Gastrocnemius medialis (tissue), 4 donors: ENCODE measurements at regions of chr6 and their contacts with region 1.

Region 1: GRCh38 chr6:45930420-45931040 is 85.1 kb downstream of the CLIC5 start:
- DNase-seq: peak; percentile 53 to 81
- ATAC-seq: peak; percentile 87 to 94
- H3K4me3 ChIP-seq: no peak overlapping the region
- H3K27ac ChIP-seq: peak overlapping the region; percentile 1 to 62 (median 52)
- H3K4me1 ChIP-seq: peaks cover 13 to 20% of the 10 kb centered on the region in 2 donors
- H3K27me3 ChIP-seq: no peaks in the 10 kb centered on the region
- CTCF ChIP-seq: peak; percentile 94 to 98 (median 95)
- POLR2A ChIP-seq: no peak

Region 2: DNA sequence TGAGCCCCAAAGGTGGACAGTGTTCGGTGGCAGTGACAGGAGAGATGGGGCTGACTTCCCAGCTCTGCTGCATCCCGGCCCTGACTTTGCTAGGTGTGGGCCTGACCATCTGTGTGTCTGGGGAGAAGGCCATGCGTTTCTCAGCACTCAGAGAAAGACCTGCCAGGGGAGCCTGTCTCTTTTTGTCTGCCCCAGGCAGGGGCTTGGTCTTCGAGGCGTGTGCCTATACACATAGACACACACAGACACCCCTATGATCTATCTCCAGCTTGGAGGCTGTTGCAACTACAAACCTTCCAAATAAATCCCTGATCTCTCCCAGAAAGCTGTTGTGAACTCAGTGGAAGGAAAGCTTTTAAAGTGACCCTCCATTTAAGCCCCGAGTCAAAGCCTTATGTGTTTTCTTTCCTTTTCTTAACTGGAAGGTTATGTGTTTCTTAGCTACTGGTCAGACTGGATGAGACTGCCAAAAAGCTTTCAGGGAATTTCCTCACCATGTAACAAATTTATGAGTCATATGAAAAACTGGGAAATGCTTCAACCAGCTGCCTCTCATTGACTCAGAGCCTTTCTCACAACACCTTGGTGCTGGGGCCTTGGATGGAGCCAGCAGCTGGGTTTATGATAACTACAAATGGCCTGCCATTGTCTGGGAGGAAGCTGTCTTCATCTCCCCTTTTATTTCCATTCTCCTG is 1440.5 kb before region 1 on chr6:
- in situ Hi-C with region 1: no loop called
- intact Hi-C with region 1: loop called (anchors 5 kb)
- DNase-seq: peak; percentile 36 to 38
- ATAC-seq: peak; percentile 98 to 99
- H3K4me3 ChIP-seq: no peak overlapping the region
- H3K27ac ChIP-seq: peak overlapping the region; percentile 52 to 63 (median 58)
- H3K4me1 ChIP-seq: peaks cover 0 to 5% of the 10 kb centered on the region in 2 donors
- H3K27me3 ChIP-seq: no peaks in the 10 kb centered on the region
- CTCF ChIP-seq: no peak
- POLR2A ChIP-seq: no peak

Region 3: GRCh38 chr6:45741437-45742171 is 188.9 kb before region 1 on chr6:
- in situ Hi-C with region 1: no loop called
- intact Hi-C with region 1: no loop called
- DNase-seq: no peak
- ATAC-seq: peak; percentile 26 to 55
- H3K4me3 ChIP-seq: no peak overlapping the region
- H3K27ac ChIP-seq: peak overlapping the region in 3 of 4 donors; percentile 18 to 41 (median 18)
- H3K4me1 ChIP-seq: peaks cover 5 to 10% of the 10 kb centered on the region in 2 donors
- H3K27me3 ChIP-seq: no peaks in the 10 kb centered on the region
- CTCF ChIP-seq: no peak
- POLR2A ChIP-seq: no peak

Region 4: GRCh38 chr6:45812922-45813321 is 117.6 kb before region 1 on chr6:
- in situ Hi-C with region 1: no loop called
- intact Hi-C with region 1: no loop called
- DNase-seq: no peak
- ATAC-seq: no peak
- H3K4me3 ChIP-seq: no peak overlapping the region
- H3K27ac ChIP-seq: no peak overlapping the region
- H3K4me1 ChIP-seq: peaks cover 3 to 4% of the 10 kb centered on the region in 2 donors
- H3K27me3 ChIP-seq: peaks cover 0 to 2% (median 0%) of the 10 kb centered on the region in 3 donors
- CTCF ChIP-seq: no peak
- POLR2A ChIP-seq: no peak

Region 5: GRCh38 chr6:46015119-46015875 is 84.8 kb after region 1 on chr6 and contains the start of gene CLIC5:
- in situ Hi-C with region 1: no loop called
- intact Hi-C with region 1: loop called (anchors 2 kb)
- DNase-seq: peak; percentile 72 to 83
- ATAC-seq: peak; percentile 68 to 69
- H3K4me3 ChIP-seq: peak within 1 kb of the TSS; percentile 68 to 84 (median 81)
- H3K27ac ChIP-seq: peak within 1 kb of the TSS; percentile 89 to 99 (median 98)
- H3K4me1 ChIP-seq: peaks cover 40 to 43% of the 10 kb centered on the region in 2 donors
- H3K27me3 ChIP-seq: no peaks in the 10 kb centered on the region
- CTCF ChIP-seq: peak in 2 of 5 experiments; percentile 7 to 10
- POLR2A ChIP-seq: peak; percentile 97 to 98
- total RNA-seq, gene CLIC5: 78.6 to 97.0 (median 91.7) TPM

Region 6: GRCh38 chr6:46053039-46053933 is 122.8 kb after region 1 on chr6:
- in situ Hi-C with region 1: loop called in 2 of 4 experiments (anchors 25 kb)
- intact Hi-C with region 1: loop called (anchors 5 kb)
- DNase-seq: peak; percentile 58 to 67
- ATAC-seq: peak; percentile 97 to 98
- H3K4me3 ChIP-seq: no peak overlapping the region
- H3K27ac ChIP-seq: peak overlapping the region; percentile 81 to 87 (median 86)
- H3K4me1 ChIP-seq: peaks cover 37 to 47% of the 10 kb centered on the region in 2 donors
- H3K27me3 ChIP-seq: no peaks in the 10 kb centered on the region
- CTCF ChIP-seq: no peak
- POLR2A ChIP-seq: peak; percentile 55 to 62

Region 7: DNA sequence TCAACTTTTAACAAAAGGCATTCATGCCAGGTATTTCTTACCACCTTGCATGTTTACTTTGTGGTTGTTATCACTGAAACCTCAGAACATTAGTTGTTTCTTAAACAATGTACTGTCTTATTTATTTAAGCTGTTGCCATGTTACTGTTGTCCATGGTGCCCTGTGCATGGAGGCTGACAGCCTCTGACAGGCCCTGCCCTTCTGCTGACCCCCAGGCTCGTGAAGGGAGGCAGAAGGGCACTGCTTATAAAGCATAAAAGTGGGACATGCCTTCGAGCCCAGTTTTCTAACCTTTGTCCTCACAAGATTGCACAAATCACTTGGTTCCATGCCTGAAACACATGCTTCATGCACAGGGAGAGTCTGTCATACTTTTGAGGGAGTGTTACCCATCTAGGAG is 131.8 kb after region 1 on chr6:
- in situ Hi-C with region 1: loop called in 2 of 4 experiments (anchors 25 kb)
- intact Hi-C with region 1: no loop called
- DNase-seq: no peak
- ATAC-seq: no peak
- H3K4me3 ChIP-seq: no peak overlapping the region
- H3K27ac ChIP-seq: no peak overlapping the region
- H3K4me1 ChIP-seq: peaks cover 5 to 10% of the 10 kb centered on the region in 2 donors
- H3K27me3 ChIP-seq: no peaks in the 10 kb centered on the region
- CTCF ChIP-seq: no peak
- POLR2A ChIP-seq: no peak

Region 8: DNA sequence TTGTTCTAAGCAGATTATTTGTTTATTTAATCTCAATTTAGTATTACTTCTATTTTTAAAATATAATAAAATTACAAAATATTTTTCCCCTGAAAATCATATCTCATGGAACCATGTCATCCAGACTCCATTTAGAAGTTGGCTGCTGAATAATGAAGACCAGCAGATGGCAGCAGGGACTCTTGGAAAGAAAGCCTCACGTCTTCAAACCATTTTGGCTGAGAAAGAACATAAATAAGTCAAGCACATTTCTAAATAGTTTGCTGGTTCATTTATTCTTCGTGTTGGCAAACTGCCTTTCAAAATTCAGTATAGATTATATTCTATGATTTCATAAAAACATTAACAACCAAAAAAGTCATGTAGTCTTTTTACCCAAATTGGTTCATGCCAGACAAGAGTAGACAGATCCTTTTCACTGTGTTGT is 489.1 kb after region 1 on chr6:
- in situ Hi-C with region 1: loop called in 3 of 4 experiments (anchors 25 kb)
- intact Hi-C with region 1: no loop called
- DNase-seq: peak; percentile 30 to 62
- ATAC-seq: peak; percentile 63 to 68
- H3K4me3 ChIP-seq: no peak overlapping the region
- H3K27ac ChIP-seq: peak overlapping the region in 3 of 4 donors; percentile 9 to 65 (median 54)
- H3K4me1 ChIP-seq: peaks cover 4 to 35% of the 10 kb centered on the region in 2 donors
- H3K27me3 ChIP-seq: no peaks in the 10 kb centered on the region
- CTCF ChIP-seq: peak; percentile 69 to 84 (median 78)
- POLR2A ChIP-seq: no peak